ENCODE measurements at regions of chr9 and their contacts with region 1.

Region 1: DNA sequence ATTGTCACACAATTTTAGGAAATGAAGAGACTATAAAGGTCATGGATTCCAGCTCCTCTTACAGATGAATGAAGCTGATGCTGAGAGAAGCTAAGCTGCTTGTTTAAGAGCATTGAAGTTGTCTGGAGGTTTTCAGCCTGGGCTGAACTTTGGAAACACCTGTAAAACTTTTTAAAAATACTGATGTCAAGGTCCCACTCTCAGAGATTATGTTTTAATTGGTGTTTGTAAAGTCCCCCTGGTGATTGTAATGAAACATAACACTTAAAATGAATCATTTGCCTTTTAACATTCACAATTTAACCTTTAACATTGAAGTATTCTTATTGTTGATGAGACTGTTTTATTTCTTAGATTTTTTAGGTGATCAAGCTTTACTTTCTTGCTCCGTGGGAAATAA is 16.4 kb downstream of the RAD23B start:
- DNase-seq: peak in 1 of 35 experiments; percentile 30
- ATAC-seq: peak in 1 of 4 experiments; percentile 44
- H3K4me3 ChIP-seq: no peak overlapping the region
- H3K4me3 Mint-ChIP-seq: no peak overlapping the region
- H3K27ac ChIP-seq: no peak overlapping the region
- H3K27ac Mint-ChIP-seq: no peak overlapping the region
- H3K4me1 ChIP-seq: peaks cover 5 to 11% of the 10 kb centered on the region in 2 experiments
- H3K4me1 Mint-ChIP-seq: peaks cover 46 to 49% (median 48%) of the 10 kb centered on the region in 3 donors
- H3K27me3 ChIP-seq: no peaks in the 10 kb centered on the region
- H3K27me3 Mint-ChIP-seq: no peaks in the 10 kb centered on the region

Region 2: DNA sequence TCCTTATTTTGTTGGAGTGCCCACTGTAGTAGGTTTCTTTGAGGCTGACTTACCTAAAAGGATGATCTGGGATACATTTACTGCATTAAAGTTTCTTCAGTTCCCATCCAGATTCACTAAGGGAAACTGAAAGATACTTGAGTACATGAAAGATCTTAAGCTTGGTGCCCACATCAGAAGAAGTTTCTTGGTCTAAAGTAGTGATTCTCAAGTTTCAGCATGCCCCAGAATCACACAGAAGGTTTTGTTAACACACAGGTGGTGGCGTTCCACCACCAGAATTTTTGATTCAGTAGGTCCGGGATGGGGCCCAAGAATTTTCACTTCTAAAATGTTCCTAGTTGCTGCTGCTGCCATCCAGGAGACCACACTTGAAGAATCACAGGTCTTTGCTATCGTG is 265.5 kb before region 1 on chr9:
- CTCF ChIA-PET with region 1: no interaction called
- POLR2A ChIA-PET with region 1: no interaction called
- DNase-seq: peak in 1 of 35 experiments; percentile 3
- ATAC-seq: peak in 1 of 4 experiments; percentile 47
- H3K4me3 ChIP-seq: no peak overlapping the region
- H3K4me3 Mint-ChIP-seq: no peak overlapping the region
- H3K27ac ChIP-seq: no peak overlapping the region
- H3K27ac Mint-ChIP-seq: no peak overlapping the region
- H3K4me1 ChIP-seq: peaks cover 0 to 2% of the 10 kb centered on the region in 2 experiments
- H3K4me1 Mint-ChIP-seq: peaks cover 0 to 10% (median 0%) of the 10 kb centered on the region in 3 donors
- H3K27me3 ChIP-seq: no peaks in the 10 kb centered on the region
- H3K27me3 Mint-ChIP-seq: peaks cover 6 to 9% of the 10 kb centered on the region in 2 donors

Region 3: DNA sequence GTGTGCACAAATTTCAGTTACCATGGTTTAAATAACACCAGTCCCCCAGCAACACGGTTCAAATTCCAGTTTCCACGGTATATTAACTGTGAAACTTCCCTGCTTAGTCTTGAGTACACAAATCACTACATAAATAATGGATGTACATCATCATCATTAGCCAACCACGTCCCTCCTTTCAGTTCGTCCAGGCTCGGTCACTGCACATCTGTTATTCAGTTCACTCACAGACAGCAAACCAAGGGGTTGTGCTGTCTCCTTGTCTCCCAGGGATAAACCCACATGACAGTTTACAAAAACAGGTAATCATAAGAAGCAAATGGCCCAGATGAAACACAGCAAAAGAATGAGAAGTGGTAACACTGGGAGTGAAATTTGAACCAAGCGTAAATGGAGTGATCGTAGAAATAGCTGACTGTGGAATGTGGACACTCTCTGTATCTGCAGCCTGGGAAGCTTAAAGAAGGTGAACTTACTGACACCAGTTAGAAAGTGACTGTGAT is 77.4 kb before region 1 on chr9:
- CTCF ChIA-PET with region 1: no interaction called
- POLR2A ChIA-PET with region 1: no interaction called
- DNase-seq: no peak
- ATAC-seq: no peak
- H3K4me3 ChIP-seq: no peak overlapping the region
- H3K4me3 Mint-ChIP-seq: no peak overlapping the region
- H3K27ac ChIP-seq: no peak overlapping the region
- H3K27ac Mint-ChIP-seq: no peak overlapping the region
- H3K4me1 ChIP-seq: no peaks in the 10 kb centered on the region
- H3K4me1 Mint-ChIP-seq: no peaks in the 10 kb centered on the region
- H3K27me3 ChIP-seq: no peaks in the 10 kb centered on the region
- H3K27me3 Mint-ChIP-seq: peaks cover 10 to 19% of the 10 kb centered on the region in 2 donors

Region 4: GRCh38 chr9:107261106-107261505 is 38.3 kb before region 1 on chr9:
- CTCF ChIA-PET with region 1: no interaction called
- POLR2A ChIA-PET with region 1: no interaction called
- DNase-seq: no peak
- ATAC-seq: no peak
- H3K4me3 ChIP-seq: no peak overlapping the region
- H3K4me3 Mint-ChIP-seq: no peak overlapping the region
- H3K27ac ChIP-seq: no peak overlapping the region
- H3K27ac Mint-ChIP-seq: no peak overlapping the region
- H3K4me1 ChIP-seq: no peaks in the 10 kb centered on the region
- H3K4me1 Mint-ChIP-seq: peaks cover 0 to 7% (median 0%) of the 10 kb centered on the region in 3 donors
- H3K27me3 ChIP-seq: no peaks in the 10 kb centered on the region
- H3K27me3 Mint-ChIP-seq: peaks cover 0 to 11% of the 10 kb centered on the region in 2 donors

Region 5: DNA sequence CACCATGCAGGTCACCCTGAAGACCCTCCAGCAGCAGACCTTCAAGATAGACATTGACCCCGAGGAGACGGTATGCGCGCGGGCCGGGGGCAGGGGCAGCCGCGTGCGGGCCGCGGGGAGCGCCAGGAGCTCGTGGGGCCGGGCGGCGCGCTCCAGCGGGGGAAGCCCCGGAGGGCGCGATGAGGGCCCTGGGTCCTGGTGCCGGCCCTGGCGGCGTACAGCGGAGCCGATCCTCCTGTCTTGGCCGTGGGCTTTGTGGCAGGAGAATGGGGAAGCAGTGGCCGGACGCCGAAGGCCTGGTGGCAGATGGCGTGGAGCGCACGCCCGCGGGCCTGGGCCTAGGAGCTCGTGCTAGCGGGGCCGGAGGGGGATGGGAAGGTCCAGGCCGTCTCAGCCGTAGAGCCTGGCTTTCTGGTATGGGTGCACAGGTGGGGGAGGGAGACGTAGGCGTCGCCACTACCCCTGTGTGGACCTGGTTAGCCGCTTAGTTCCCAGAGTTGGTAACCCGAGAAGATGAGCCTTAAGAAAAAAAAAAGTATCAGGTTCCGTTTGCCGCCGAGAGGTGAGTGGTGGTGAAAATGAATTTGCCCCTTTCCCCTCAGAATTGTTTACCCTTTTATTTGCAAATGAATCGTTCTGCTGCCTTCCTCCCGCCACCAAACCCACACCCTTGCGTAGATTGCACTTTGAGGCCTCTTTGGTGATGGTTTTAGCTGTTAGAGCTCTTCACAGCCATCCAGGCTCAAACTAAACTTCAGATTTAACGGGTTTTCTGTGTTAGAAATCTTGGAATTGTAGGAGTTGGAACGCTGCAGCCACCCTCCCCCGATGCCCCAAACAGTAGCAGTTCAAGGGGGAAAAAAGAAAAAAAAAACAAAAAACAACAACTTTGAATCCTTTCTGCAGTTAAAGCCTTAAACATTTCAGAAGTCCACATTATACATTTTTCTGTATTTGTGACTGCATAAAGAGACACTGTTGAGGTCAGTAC is 15.5 kb before region 1 on chr9:
- CTCF ChIA-PET with region 1: interaction called, 4 to 11 read pairs
- POLR2A ChIA-PET with region 1: interaction called, 3 to 6 read pairs
- DNase-seq: peak; percentile 27 to 77 (median 56)
- ATAC-seq: peak; percentile 13 to 31 (median 26)
- H3K4me3 ChIP-seq: peak overlapping the region; percentile 67 to 83
- H3K4me3 Mint-ChIP-seq: peak overlapping the region; percentile 84 to 97 (median 90)
- H3K27ac ChIP-seq: peak overlapping the region; percentile 65
- H3K27ac Mint-ChIP-seq: peak overlapping the region; percentile 87 to 93
- H3K4me1 ChIP-seq: peaks cover 19 to 22% of the 10 kb centered on the region in 2 experiments
- H3K4me1 Mint-ChIP-seq: peaks cover 47 to 58% (median 49%) of the 10 kb centered on the region in 3 donors
- H3K27me3 ChIP-seq: no peaks in the 10 kb centered on the region
- H3K27me3 Mint-ChIP-seq: no peaks in the 10 kb centered on the region

Region 6: DNA sequence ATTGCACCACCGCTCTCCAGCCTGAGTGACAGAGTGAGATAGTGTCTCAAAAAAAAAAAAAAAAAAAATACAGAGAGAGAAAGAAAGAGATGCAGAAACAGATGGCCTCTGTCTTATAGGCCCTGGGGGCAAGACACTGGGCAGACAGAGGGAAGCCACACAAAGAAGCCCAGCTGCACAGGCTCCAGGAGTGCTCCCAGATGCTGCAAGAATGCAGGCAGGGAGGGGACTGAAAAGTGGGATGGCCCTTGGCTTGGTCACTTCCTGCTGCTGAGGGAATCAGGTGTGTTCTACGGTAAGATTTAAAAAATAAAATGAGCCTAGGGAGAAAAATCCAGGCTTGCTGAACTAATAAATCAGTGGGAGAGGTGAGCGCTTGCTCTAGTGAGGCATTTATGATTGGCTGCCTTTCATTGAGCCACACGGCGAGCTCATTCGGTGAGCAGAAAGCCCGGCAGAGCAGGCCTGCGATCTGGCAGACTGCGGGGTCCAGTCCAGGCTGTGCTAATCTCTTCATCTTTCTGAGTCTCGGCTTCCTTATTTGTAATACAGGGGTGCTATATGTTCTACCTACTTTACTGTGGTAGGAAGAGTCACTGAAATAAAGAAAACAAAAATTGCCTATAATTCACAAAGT is 64.2 kb after region 1 on chr9:
- CTCF ChIA-PET with region 1: no interaction called
- POLR2A ChIA-PET with region 1: no interaction called
- DNase-seq: no peak
- ATAC-seq: no peak
- H3K4me3 ChIP-seq: no peak overlapping the region
- H3K4me3 Mint-ChIP-seq: no peak overlapping the region
- H3K27ac ChIP-seq: no peak overlapping the region
- H3K27ac Mint-ChIP-seq: no peak overlapping the region
- H3K4me1 ChIP-seq: no peaks in the 10 kb centered on the region
- H3K4me1 Mint-ChIP-seq: no peaks in the 10 kb centered on the region
- H3K27me3 ChIP-seq: peaks cover 0 to 20% of the 10 kb centered on the region in 2 experiments
- H3K27me3 Mint-ChIP-seq: peaks cover 10 to 12% of the 10 kb centered on the region in 2 donors

Measured in T-cell (primary cell).